CD14-positive monocyte (primary cell): ENCODE measurements at regions of chr5 and their contacts with region 1.

Region 1: DNA sequence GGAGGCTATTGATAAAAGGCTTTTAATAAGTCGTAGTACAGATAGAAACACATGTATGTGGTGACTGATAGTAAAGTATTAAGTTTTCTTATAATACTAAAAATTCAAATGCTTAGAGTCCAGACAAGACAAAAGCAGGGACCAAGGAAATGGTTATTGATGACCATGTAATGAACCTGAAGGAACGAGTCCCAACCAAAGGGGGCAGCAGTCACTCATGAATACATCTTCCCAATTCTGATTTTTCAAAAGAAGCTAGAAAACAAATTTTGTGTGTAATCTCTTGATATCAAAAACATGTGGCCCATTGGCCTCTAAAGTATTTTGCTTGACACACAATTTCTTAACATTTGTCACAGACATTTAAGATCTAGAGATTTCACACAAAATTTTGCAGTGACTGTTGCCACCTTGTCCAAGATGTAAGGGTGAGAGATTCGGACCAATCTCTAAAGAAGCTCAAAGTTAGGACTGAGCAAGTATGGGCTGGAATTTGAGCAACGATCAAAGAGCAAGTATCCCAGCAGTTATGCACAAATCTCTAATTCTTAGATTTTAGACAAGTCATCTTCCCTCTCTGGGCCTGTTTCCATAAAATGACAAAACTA is 66.8 kb downstream of the ARL15 start:
- DNase-seq: peak; percentile 21 to 43 (median 34)
- H3K4me3 ChIP-seq: no peak overlapping the region
- H3K4me3 Mint-ChIP-seq: no peak overlapping the region
- H3K27ac ChIP-seq: no peak overlapping the region
- H3K27ac Mint-ChIP-seq: no peak overlapping the region
- H3K4me1 ChIP-seq: peaks cover 1 to 2% of the 10 kb centered on the region in 2 donors
- H3K4me1 Mint-ChIP-seq: no peaks in the 10 kb centered on the region
- H3K27me3 ChIP-seq: no peaks in the 10 kb centered on the region
- H3K27me3 Mint-ChIP-seq: peaks cover 0 to 2% (median 0%) of the 10 kb centered on the region in 3 donors
- CTCF ChIP-seq: peak; percentile 87

Region 2: DNA sequence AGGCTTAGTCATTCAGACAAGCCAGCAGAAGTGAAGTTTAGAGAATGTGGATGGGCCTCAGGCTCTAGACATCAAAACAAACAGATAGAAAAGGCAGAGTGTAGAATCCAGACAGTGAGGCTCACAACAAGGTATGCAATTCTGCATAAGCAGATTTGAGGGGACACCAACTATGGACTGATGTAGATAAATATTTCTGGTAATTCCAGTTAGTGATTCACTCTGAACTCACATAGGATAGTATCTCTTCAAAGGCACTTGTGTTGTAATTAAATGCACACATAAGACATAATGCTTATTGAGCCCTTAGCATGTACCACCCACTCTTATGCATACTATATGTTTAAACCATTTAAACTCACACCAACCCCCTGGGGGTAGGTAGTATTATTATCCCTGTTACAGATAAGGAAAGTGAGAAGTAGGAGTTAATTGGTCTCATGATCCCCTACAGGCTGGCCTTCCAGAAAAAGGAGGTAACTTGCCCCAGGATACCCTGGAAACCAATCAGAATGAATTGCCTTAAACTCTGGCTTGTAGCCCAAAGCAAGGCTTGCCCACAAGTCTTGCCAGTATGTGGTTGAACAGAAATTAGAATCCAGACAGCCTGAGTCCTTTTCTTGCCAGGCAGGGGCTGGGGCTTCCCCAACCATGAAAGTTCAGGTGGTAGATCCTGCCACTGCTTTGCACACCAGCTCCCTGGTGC is 172.5 kb after region 1 on chr5:
- intact Hi-C with region 1: loop called (anchors 5 kb)
- DNase-seq: no peak
- H3K4me3 ChIP-seq: no peak overlapping the region
- H3K4me3 Mint-ChIP-seq: no peak overlapping the region
- H3K27ac ChIP-seq: no peak overlapping the region
- H3K27ac Mint-ChIP-seq: no peak overlapping the region
- H3K4me1 ChIP-seq: no peaks in the 10 kb centered on the region
- H3K4me1 Mint-ChIP-seq: no peaks in the 10 kb centered on the region
- H3K27me3 ChIP-seq: no peaks in the 10 kb centered on the region
- H3K27me3 Mint-ChIP-seq: peaks cover 1 to 12% (median 6%) of the 10 kb centered on the region in 3 donors
- CTCF ChIP-seq: no peak

Region 3: GRCh38 chr5:54421976-54422375 is 178.4 kb after region 1 on chr5:
- intact Hi-C with region 1: loop called (anchors 5 kb)
- DNase-seq: no peak
- H3K4me3 ChIP-seq: no peak overlapping the region
- H3K4me3 Mint-ChIP-seq: no peak overlapping the region
- H3K27ac ChIP-seq: no peak overlapping the region
- H3K27ac Mint-ChIP-seq: no peak overlapping the region
- H3K4me1 ChIP-seq: no peaks in the 10 kb centered on the region
- H3K4me1 Mint-ChIP-seq: no peaks in the 10 kb centered on the region
- H3K27me3 ChIP-seq: no peaks in the 10 kb centered on the region
- H3K27me3 Mint-ChIP-seq: peaks cover 7 to 15% (median 11%) of the 10 kb centered on the region in 3 donors
- CTCF ChIP-seq: no peak

Region 4: DNA sequence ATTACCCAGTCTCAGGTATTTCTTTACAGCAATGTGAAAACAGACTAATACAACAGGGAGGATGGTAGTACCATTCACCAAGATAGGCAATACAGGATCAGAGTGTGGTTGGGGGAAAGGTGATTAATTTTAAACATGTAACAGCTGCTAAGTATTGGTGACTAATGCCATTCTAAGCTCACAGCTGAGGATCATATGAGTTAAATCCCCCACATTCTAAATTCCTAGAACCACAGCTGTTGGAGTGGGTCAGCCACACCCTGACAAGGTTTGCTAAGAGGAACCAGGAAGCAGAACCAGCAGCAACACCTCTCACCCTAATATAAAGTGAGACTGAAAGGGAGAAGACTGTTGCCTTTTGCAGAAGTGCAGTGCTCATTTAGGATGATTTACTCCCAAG is 236.7 kb after region 1 on chr5:
- intact Hi-C with region 1: loop called in 1 of 2 experiments (anchors 10 kb)
- DNase-seq: no peak
- H3K4me3 ChIP-seq: no peak overlapping the region
- H3K4me3 Mint-ChIP-seq: no peak overlapping the region
- H3K27ac ChIP-seq: no peak overlapping the region
- H3K27ac Mint-ChIP-seq: peak overlapping the region in 3 of 7 donors; percentile 13 to 66 (median 38)
- H3K4me1 ChIP-seq: peaks cover 0 to 8% of the 10 kb centered on the region in 2 donors
- H3K4me1 Mint-ChIP-seq: peaks cover 14% of the 10 kb centered on the region
- H3K27me3 ChIP-seq: no peaks in the 10 kb centered on the region
- H3K27me3 Mint-ChIP-seq: peaks cover 0 to 4% (median 2%) of the 10 kb centered on the region in 3 donors
- CTCF ChIP-seq: no peak

Region 5: DNA sequence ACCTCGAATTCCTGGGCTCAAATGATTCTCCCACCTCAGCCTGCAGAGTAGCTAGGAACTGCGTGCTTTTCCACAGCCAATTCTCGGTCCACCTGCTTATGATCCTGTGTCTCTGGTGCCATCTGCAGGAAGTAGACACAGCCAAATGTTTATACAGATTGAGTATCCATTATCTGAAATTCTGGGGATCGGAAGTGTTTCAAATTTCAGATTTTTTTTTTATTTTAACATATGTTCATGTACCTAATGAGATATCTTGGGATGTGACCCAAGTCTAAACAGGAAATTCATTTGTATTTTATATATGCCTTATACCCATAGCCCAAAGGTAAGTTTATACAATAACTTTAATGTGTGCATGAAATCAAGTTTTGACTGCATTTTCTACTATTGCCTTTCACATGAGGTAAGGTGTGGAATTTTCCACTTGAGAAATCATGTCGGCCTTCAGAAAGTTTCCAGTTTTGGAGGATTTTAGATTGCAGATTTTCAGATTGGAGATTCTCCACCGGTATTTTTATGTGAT is 652.3 kb after region 1 on chr5:
- intact Hi-C with region 1: loop called in 1 of 2 experiments (anchors 10 kb)
- DNase-seq: no peak
- H3K4me3 ChIP-seq: no peak overlapping the region
- H3K4me3 Mint-ChIP-seq: peak overlapping the region in 1 of 2 donors; percentile 43
- H3K27ac ChIP-seq: no peak overlapping the region
- H3K27ac Mint-ChIP-seq: no peak overlapping the region
- H3K4me1 ChIP-seq: peaks cover 3 to 4% of the 10 kb centered on the region in 2 donors
- H3K4me1 Mint-ChIP-seq: peaks cover 12% of the 10 kb centered on the region
- H3K27me3 ChIP-seq: no peaks in the 10 kb centered on the region
- H3K27me3 Mint-ChIP-seq: peaks cover 3 to 10% (median 5%) of the 10 kb centered on the region in 3 donors
- CTCF ChIP-seq: no peak

Region 6: DNA sequence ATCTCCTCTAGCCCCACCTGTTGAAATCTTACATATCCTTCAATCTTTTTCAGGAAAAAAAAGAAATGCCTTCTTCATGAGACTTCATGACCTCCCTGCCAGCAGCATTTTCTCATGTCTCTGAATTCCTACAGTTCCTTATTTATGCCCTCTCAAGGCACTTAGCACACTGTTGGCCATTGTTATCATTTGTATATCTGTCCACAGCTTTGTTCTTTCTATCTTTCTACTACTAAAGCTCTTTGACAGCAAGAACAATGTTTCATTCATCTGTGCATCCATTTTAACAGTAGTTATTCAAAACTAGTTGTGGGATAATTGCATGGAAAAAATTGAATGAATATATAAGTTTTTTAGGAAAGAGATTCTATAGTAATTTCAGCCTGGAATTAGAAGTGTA is 838.0 kb after region 1 on chr5:
- intact Hi-C with region 1: no loop called
- DNase-seq: no peak
- H3K4me3 ChIP-seq: no peak overlapping the region
- H3K4me3 Mint-ChIP-seq: no peak overlapping the region
- H3K27ac ChIP-seq: no peak overlapping the region
- H3K27ac Mint-ChIP-seq: no peak overlapping the region
- H3K4me1 ChIP-seq: no peaks in the 10 kb centered on the region
- H3K4me1 Mint-ChIP-seq: no peaks in the 10 kb centered on the region
- H3K27me3 ChIP-seq: no peaks in the 10 kb centered on the region
- H3K27me3 Mint-ChIP-seq: peaks cover 0 to 5% (median 2%) of the 10 kb centered on the region in 3 donors
- CTCF ChIP-seq: no peak